ENCODE measurements at regions of chr7 and their contacts with region 1.

Region 1: DNA sequence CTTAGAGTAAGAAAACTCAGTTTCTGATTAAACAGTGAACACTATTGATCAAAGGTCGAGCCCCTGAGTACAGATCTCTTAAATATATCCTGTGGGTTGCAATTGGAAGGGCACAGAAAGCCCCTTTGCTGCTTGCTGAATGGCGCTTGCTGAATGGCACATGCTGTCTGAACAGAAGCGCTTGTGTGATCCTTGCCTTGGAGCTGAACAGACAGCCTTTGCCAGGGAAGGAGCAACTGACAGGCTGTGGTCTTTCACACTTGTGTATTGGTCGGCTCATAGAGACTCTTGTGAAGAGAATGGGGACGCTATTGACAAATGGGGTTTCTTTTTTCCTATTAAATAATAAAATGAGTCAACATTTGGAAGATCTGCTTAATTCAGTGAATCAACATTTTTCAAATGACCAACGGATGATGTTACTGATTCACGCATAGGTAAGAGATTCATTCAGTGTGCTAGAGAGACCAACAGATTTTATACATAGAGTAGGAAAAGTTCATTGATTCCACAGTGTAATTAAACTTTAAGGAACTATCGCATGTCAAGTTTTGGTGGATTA is 99.4 kb upstream of the TNS3 start:
- DNase-seq: no peak
- ATAC-seq: no peak
- H3K4me3 ChIP-seq: no peak overlapping the region
- H3K27ac ChIP-seq: no peak overlapping the region
- H3K4me1 ChIP-seq: no peaks in the 10 kb centered on the region
- H3K27me3 ChIP-seq: no peaks in the 10 kb centered on the region

Region 2: DNA sequence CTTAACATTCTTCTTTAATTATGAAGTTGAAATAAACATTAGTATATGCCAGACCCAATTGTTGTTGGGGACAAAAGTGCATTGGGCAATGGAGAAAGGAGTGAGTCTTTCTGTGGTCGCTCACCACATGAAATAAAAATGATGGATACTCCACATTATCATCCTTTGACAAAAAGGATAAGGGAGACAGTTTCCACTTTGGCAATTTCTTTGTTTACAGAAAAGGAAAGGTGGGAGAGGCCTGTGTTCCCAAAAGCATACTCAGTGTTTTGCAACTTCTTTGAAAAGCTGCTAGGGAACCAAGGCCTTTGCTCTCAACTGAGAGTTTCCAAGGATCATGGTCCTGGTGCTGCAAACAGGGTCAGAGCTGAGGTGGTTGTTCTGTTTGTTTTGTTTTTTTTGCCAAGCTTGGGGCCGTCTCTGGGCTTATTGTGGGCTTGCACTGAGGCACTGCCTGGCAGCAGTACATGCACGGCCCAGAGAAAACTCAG is 441.4 kb before region 1 on chr7:
- intact Hi-C with region 1: no loop called
- DNase-seq: no peak
- ATAC-seq: peak; percentile 61
- H3K4me3 ChIP-seq: no peak overlapping the region
- H3K27ac ChIP-seq: no peak overlapping the region
- H3K4me1 ChIP-seq: no peaks in the 10 kb centered on the region
- H3K27me3 ChIP-seq: no peaks in the 10 kb centered on the region

Region 3: DNA sequence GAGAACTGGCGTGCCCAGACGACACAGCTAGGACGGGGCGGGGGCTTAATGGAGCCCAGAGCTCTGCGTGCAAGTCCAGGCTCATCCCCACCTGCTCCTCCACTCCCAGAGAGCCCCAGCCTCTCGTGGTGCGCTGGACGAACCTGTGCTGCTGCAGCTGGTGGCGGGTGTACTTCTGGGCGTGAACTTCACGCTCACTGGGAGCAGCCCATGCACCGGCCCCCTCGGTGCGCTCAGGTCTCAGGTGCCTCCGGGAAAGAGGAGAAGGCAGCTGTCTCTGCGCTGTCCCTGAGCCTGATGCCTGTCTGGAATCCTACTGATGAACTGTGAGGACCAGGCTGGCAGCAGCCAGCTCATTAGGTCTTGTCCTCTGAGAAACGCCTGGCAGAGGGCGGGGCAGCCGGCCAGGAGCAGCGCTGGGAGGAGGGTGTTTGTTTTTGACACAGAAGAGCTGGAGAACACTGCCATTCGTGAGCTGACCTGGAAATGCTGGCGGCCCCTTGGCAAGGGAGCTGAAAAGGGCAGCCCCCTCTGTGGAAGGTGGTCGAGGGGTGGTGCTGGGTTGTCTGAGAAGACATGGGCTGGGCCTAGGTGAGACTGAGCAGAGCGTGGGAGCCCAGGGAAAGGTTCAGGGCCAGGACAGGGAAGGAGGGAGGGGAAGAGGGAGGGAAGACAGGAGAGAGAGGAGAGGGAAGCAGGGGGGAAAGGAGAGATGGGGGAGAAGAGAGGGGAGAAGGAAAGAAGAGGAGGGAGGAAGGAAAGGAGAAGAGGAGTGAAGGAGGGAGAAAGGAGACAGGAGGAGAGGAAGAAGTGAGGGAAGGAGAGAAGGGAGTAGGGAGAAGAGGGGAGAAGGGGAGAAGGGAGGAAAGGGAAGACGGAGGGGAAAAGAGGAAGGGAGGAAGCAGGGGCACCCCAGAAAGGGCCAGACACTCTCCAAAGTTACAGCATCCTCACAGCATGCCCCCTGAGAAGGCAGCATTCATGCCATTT is 45.9 kb before region 1 on chr7:
- intact Hi-C with region 1: loop called in 1 of 2 experiments (anchors 5 kb)
- DNase-seq: peak; percentile 64 to 84
- ATAC-seq: no peak
- H3K4me3 ChIP-seq: no peak overlapping the region
- H3K27ac ChIP-seq: peak overlapping the region; percentile 60 to 91
- H3K4me1 ChIP-seq: peaks cover 0 to 4% of the 10 kb centered on the region in 2 donors
- H3K27me3 ChIP-seq: no peaks in the 10 kb centered on the region